Prostate gland (tissue), 2 donors: ENCODE measurements at regions of chr12 and their contacts with region 1.

Region 1: GRCh38 chr12:110583137-110584059 is at the start of gene PPTC7:
- DNase-seq: peak; percentile 96
- H3K4me3 ChIP-seq: peak within 1 kb of the TSS; percentile 77 to 90
- H3K27ac ChIP-seq: peak within 1 kb of the TSS; percentile 89 to 90
- H3K4me1 ChIP-seq: no peaks in the 10 kb centered on the region
- H3K27me3 ChIP-seq: no peaks in the 10 kb centered on the region
- CTCF ChIP-seq: peak in 1 of 4 experiments; percentile 19
- POLR2A ChIP-seq: peak; percentile 92
- total RNA-seq, gene PPTC7: 11.2 to 21.8 TPM

Region 2: GRCh38 chr12:110546339-110546738 is 37.1 kb before region 1 on chr12:
- intact Hi-C with region 1: loop called (anchors 5 kb)
- DNase-seq: no peak
- H3K4me3 ChIP-seq: no peak overlapping the region
- H3K27ac ChIP-seq: peak overlapping the region; percentile 29 to 81
- H3K4me1 ChIP-seq: peaks cover 22% of the 10 kb centered on the region
- H3K27me3 ChIP-seq: no peaks in the 10 kb centered on the region
- CTCF ChIP-seq: no peak
- POLR2A ChIP-seq: no peak